ENCODE measurements at regions of chr20 and their contacts with region 1.

Region 1: DNA sequence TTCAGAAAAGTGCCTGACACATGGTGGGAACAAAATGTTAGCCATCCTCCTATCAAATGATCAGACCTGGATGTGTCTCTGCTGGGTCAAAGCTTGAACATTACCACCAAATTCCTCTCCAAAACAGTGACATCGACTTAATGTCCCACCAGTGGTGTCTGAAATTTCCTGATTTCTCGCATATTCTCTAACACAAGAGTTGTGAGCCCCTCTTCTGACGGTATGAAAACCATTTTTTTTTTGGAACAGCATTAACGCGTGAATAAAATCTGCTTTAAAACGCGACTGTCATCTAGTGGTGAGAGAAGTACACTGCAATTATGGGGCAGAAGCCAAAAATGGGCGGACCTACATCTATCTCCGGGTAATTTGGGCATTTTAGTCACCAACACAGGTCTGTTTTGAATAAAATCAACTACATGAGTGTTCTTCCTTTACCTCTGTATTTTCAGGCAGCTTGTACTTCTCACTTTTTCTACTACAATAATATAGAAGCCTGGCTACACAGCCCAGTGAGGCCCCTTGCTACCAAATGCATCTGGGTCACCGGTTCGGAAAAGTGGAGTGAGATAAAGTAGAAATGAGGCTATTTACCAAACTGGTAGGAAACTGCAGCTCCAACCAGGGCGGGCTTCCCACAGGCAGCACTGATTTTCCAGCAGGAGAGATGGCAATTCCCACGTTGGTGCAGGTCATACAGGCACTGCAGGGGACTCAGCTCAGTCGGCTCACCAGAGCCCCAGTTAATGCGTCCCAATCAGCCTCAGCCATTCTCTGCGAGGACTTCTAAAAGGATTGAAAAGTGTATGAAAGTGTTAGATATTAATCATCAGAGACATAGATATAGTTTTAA is 27.4 kb downstream of the MGME1 start:
- DNase-seq: peak in 1 of 3 donors; percentile 76
- ATAC-seq: peak; percentile 78
- H3K4me3 ChIP-seq: no peak overlapping the region
- H3K4me1 ChIP-seq: peaks cover 11% of the 10 kb centered on the region
- CTCF ChIP-seq: peak; percentile 90

Region 2: GRCh38 chr20:17504898-17505635 is 491.1 kb before region 1 on chr20:
- intact Hi-C with region 1: loop called in 1 of 2 experiments (anchors 10 kb)
- DNase-seq: peak; percentile 69 to 78 (median 75)
- ATAC-seq: peak; percentile 86
- H3K4me3 ChIP-seq: no peak overlapping the region
- H3K4me1 ChIP-seq: peaks cover 5% of the 10 kb centered on the region
- CTCF ChIP-seq: peak; percentile 41

Region 3: GRCh38 chr20:18032977-18033892 is 37.0 kb after region 1 on chr20:
- intact Hi-C with region 1: no loop called
- DNase-seq: peak; percentile 75 to 84 (median 77)
- ATAC-seq: peak; percentile 93
- H3K4me3 ChIP-seq: no peak overlapping the region
- H3K4me1 ChIP-seq: peaks cover 33% of the 10 kb centered on the region
- CTCF ChIP-seq: no peak

Region 4: DNA sequence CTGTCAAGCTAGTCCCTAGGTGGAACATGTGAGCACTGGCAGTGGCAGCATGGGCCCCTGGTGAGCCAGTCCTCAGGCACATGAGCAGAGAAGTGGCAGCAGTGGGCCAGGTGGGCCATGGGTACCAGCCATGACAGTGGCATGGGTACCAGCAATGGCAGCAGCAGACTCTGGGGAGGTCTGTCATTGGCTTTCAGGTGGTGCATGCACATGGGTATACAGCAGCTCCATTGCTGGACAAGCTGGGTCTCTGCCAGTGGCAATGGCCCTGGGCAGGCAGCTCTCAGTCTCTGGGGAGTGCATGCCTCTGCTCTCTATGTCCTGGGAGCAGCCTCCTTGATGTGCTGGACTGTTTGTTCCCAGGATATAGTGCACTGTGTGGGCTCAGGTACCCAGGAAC is 206.8 kb after region 1 on chr20:
- intact Hi-C with region 1: no loop called
- DNase-seq: no peak
- ATAC-seq: no peak
- H3K4me3 ChIP-seq: no peak overlapping the region
- H3K4me1 ChIP-seq: no peaks in the 10 kb centered on the region
- CTCF ChIP-seq: no peak

Measured in mucosa of descending colon (tissue), 3 donors.